PC-9 (cell line): ENCODE measurements at regions of chr7 and their contacts with region 1.

Region 1: DNA sequence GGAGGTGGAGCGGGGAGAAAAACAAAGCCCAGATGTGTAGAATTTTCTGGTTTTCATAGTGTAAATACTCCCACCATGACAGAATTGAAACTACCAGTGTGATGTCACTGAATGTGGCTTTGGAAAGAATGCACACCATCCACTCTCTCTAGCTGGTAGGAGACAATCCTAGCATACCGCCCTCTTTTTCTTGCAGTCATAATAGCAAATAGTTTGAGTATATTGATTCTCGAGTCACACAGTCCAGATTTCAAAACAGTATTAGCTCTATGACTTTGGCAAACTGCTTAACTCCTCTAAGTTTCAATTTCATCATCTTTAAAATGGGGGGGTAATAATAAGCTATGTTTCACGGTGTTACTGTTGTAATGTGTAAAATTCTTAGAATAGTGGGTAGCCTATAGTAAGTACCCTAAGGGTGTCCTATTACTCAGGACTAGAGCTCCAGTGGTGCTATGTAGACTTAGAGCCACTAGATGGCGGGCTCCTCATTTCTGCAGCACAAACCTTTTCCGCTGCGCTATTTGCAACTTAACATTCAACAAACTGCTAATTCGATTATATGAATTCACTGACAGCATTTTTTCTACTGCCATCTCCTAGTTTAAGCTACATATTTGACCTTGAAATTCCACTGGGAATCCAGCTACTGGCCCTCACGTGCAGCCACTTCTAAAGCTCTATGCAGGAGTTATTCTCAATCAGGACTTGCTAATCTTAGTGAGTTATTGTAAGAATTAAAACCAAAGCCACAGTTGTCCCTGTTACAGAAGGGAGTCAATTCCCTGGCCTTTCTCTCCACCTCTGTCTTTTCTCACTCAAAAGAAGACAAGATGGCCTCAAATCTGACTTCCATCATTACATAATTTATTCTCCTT is 18.7 kb downstream of the TAS2R40 start:
- DNase-seq: peak; percentile 71 to 84
- H3K4me3 ChIP-seq: peak overlapping the region; percentile 11; the same call in 1 of the 2 replicates
- H3K27ac ChIP-seq: peak overlapping the region; percentile 80
- H3K4me1 ChIP-seq: peaks cover 54% of the 10 kb centered on the region
- H3K27me3 ChIP-seq: no peaks in the 10 kb centered on the region
- CTCF ChIP-seq: peak; percentile 98

Region 2: DNA sequence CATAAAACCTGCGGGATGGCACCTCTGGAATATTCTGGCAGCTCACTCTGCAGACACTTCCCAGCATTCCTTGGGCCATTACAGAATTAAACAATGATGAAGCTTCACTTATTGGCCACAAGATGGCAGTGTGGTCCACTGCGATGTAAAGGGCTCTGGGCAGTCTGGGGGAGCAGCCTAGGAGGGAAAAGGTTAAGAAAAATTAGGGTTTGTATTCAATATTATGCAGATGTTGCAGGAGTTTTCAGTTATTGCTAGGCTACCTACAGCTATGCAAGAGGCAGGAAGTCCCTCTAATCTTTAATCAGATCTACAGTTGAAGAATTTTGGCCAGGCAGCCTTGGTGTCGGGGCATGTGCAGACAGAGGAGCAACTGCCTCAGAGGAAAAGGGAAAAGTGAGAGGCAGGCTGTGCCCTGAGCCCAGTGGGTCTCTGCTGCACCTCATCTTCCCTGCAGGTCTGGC is 724.5 kb before region 1 on chr7:
- CTCF ChIA-PET with region 1: no interaction called
- POLR2A ChIA-PET with region 1: no interaction called
- intact Hi-C with region 1: no loop called
- DNase-seq: peak; percentile 72 to 87
- H3K4me3 ChIP-seq: no peak overlapping the region
- H3K27ac ChIP-seq: peak overlapping the region; percentile 79
- H3K4me1 ChIP-seq: peaks cover 48% of the 10 kb centered on the region
- H3K27me3 ChIP-seq: no peaks in the 10 kb centered on the region
- CTCF ChIP-seq: peak; percentile 97

Region 3: DNA sequence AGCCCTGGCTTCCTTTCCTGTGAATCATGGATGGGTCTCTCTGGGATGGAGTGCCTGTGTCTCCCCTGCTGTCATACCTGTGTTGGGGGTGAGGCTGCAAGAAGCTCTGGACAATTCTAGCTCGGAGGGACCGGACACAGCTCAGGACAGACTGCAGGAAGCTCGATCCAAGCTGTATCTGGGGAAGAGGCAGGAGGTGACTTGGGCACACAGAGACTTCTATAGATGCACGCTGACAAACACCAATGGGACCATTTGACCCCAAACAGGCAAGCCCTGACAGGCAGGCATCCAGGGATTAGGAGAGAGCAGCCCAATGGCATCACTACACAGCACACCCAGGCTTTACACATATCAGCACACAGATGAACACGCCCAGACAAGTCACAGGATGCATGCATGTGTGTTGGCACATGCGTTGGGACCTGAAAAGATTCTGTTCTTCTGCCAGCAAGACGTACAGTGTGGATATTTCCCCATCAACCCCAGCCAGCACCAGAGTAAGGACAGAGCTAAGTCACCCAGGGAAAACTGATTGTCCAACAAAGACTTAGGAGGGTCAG is 296.7 kb before region 1 on chr7:
- CTCF ChIA-PET with region 1: no interaction called
- POLR2A ChIA-PET with region 1: no interaction called
- intact Hi-C with region 1: no loop called
- DNase-seq: no peak
- H3K4me3 ChIP-seq: no peak overlapping the region
- H3K27ac ChIP-seq: no peak overlapping the region
- H3K4me1 ChIP-seq: no peaks in the 10 kb centered on the region
- H3K27me3 ChIP-seq: 0 out of 2 replicates have a peak, but pooled peaks cover 4% of the 10 kb centered on the region
- CTCF ChIP-seq: no peak

Region 4: GRCh38 chr7:143279186-143280098 is 38.9 kb after region 1 on chr7:
- CTCF ChIA-PET with region 1: interaction called, 11 read pairs
- POLR2A ChIA-PET with region 1: no interaction called
- intact Hi-C with region 1: no loop called
- DNase-seq: peak; percentile 49 to 97
- H3K4me3 ChIP-seq: peak overlapping the region; percentile 16; the same call in 1 of the 2 replicates
- H3K27ac ChIP-seq: peak overlapping the region; percentile 82
- H3K4me1 ChIP-seq: peaks cover 43% of the 10 kb centered on the region
- H3K27me3 ChIP-seq: no peaks in the 10 kb centered on the region
- CTCF ChIP-seq: no peak

Region 5: GRCh38 chr7:143299840-143300239 is 59.3 kb after region 1 on chr7:
- CTCF ChIA-PET with region 1: interaction called, 12 read pairs
- POLR2A ChIA-PET with region 1: interaction called, 10 read pairs
- intact Hi-C with region 1: loop called (anchors 1 kb)
- DNase-seq: peak in 1 of 2 experiments; percentile 49
- H3K4me3 ChIP-seq: no peak overlapping the region
- H3K27ac ChIP-seq: no peak overlapping the region
- H3K4me1 ChIP-seq: no peaks in the 10 kb centered on the region
- H3K27me3 ChIP-seq: no peaks in the 10 kb centered on the region
- CTCF ChIP-seq: peak; percentile 82

Region 6: DNA sequence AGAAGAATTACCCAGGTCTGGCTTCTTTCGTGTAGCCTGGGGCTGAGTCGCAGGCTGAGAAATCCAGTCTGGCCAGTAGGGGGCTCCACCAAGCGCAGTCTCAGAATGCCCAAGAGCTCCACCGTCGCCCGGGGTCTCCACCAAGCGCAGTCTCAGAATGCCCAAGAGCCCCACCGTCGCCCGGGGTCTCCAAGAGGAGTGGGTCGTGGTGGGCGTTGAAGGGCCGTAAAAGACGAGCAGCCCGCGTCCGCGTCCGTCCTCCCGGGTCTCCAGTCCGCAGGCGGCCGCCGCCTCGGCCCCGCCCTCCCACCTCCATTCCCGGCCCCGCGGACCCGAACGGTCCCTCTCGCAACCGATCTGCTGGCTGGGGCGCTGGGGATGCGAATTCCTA is 139.7 kb after region 1 on chr7:
- CTCF ChIA-PET with region 1: no interaction called
- POLR2A ChIA-PET with region 1: no interaction called
- intact Hi-C with region 1: loop called (anchors 2 kb)
- DNase-seq: peak; percentile 75 to 89
- H3K4me3 ChIP-seq: peak overlapping the region; percentile 74
- H3K27ac ChIP-seq: peak overlapping the region; percentile 89
- H3K4me1 ChIP-seq: peaks cover 31% of the 10 kb centered on the region
- H3K27me3 ChIP-seq: no peaks in the 10 kb centered on the region
- CTCF ChIP-seq: peak; percentile 99

Region 7: DNA sequence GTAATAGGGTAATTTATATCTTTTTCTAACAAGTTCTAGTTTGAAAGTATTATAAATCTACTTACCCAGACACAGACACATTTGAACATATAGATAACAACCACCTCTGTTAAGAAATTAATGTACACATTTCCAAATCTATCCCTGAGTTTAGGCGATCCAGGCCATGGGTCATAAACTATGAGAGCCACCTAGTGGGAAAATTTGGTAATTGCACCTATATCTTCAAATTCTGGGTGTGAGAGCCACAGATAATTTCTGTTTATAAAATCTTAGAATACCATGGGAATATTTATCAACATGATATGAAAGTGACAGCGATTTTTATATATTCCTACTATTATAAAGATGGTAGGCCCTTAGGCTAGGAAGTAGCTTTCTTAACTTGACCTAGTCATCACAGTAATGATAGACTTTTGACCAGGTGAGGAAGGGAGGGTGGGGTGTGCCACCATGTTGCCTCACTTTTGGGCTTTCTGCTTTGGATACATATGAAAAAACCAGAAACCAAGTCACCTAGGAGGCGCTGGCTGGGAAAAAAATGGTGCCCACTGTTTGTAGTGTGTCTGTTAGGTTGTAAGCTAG is 176.1 kb after region 1 on chr7:
- CTCF ChIA-PET with region 1: interaction called, 25 read pairs
- POLR2A ChIA-PET with region 1: interaction called, 4 read pairs
- intact Hi-C with region 1: loop called (anchors 2 kb)
- DNase-seq: peak in 1 of 2 experiments; percentile 49
- H3K4me3 ChIP-seq: no peak overlapping the region
- H3K27ac ChIP-seq: no peak overlapping the region
- H3K4me1 ChIP-seq: peaks cover 6% of the 10 kb centered on the region
- H3K27me3 ChIP-seq: no peaks in the 10 kb centered on the region
- CTCF ChIP-seq: peak; percentile 95

Region 8: DNA sequence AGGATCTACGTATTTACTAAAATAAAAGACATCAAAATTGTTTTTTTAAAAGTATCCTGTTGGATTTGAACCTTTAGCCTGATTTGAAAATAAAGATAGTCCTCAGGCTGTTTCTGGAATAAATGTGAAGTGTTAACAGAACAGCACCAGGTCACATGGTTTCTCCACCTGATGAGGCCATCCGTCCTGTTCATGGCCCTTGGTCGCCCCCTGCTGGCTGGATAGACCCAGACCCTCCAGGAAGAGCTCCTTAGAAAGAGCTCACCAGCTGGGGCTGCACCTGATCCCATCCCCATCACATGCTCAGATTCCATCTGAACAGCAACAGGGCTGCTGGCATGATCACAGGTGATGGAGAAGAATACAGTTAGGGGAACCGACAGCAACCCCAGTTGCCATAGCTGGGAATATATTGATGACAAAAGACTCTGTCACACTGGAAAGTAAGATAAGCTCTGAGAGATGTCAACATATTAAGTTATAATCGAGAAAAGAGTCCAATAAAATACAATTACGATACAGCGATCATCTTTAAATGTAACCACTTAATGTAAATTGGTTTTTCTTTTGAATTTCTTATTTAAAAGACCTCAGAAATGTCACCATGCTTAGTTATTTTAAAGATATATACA is 887.3 kb after region 1 on chr7:
- CTCF ChIA-PET with region 1: no interaction called
- POLR2A ChIA-PET with region 1: no interaction called
- intact Hi-C with region 1: loop called (anchors 10 kb)
- DNase-seq: peak; percentile 53 to 85
- H3K4me3 ChIP-seq: no peak overlapping the region
- H3K27ac ChIP-seq: no peak overlapping the region
- H3K4me1 ChIP-seq: no peaks in the 10 kb centered on the region
- H3K27me3 ChIP-seq: no peaks in the 10 kb centered on the region
- CTCF ChIP-seq: peak; percentile 97